Activated CD4-positive, alpha-beta T cell treated with anti-CD3 and anti-CD28 coated beads for 36 hours (primary cell): ENCODE measurements at regions of chr12 and their contacts with region 1.

Region 1: DNA sequence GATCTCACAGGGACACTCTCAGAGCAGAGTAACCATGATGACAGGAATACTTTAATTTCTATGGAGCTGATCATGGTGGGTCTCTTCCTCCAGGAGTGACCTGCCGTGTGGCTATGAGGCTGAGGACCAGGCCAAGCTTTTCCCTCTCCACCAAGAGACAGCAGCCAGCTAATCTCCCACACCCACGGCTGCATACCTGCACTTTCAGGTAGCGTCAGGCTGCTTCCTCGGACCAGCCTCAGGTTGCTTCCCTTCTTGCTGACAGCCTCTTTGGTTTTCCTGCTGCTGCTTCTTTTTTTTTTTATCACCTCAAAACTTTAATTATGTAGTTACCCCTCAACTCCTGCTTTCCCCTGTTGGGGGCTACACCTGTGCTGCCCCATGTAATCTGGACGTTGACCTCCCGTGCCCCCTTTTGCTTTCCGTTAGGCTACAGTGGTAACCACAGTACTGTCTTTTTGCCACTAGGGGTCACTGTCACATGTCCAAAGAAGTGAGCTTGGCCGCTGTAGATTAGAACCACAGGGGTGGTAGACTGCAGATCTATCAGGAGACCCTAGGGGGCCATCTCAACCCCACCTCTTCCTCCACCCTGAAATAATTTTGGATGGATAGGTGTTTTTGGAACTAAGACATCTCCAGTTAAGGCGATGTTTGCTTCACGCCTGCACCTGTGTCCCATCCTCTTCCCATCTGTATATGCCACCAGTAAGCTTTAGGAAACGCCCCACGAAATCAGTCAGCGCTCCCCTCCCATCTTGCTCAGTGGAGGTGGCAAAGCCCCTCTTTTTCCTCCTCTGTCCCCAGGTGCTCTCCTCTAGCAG is 7.8 kb upstream of the PIP4K2C start:
- DNase-seq: peak; percentile 80
- ATAC-seq: peak; percentile 100
- H3K4me3 Mint-ChIP-seq: no peak overlapping the region
- H3K27ac Mint-ChIP-seq: no peak overlapping the region
- H3K4me1 Mint-ChIP-seq: no peaks in the 10 kb centered on the region
- H3K27me3 Mint-ChIP-seq: peaks cover 5% of the 10 kb centered on the region

Region 2: DNA sequence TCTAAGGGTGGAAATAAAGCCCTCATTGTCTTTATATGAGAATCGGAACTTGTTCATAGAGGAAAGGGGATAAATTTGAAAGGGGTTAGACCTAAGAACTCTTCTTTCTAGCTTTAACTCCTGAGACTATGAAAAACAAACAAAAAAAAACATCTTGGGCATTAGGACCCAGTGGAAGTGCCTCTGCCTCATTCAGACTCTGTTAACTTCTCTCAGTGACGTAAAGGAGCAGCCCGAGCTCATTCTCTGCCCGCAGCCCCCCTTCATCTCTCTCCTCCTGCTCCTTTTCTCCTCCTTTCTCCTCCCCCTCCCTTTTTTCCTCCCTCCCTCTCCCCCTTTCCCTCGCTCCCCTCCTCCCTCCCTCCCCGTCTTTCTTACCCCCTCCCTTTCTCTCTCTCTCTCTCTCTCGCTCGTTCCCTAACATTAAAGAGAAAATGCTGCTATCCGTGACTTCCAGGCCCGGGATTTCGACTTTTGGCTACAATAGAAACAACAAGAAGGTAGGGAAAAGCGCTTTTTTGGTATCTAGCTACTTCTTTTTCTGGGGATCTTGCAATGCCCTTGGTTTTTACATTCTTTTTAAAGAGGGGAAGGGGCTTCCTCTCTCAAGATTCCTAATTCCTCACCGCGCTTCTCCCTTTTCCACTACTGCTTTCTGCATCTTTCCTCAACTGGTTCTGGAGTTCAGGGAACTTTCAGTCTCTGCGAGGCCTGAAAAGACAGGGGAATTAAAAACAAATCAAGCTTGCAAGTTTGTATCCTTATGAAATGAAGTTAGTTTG is 1061.4 kb before region 1 on chr12 and contains the start of gene RBMS2:
- CTCF ChIA-PET with region 1: no interaction called
- POLR2A ChIA-PET with region 1: no interaction called
- intact Hi-C with region 1: no loop called
- DNase-seq: peak; percentile 66
- ATAC-seq: peak; percentile 90
- H3K4me3 Mint-ChIP-seq: peak within 1 kb of the TSS; percentile 75
- H3K27ac Mint-ChIP-seq: peak within 1 kb of the TSS; percentile 79
- H3K4me1 Mint-ChIP-seq: peaks cover 29% of the 10 kb centered on the region
- H3K27me3 Mint-ChIP-seq: no peaks in the 10 kb centered on the region
- total RNA-seq, gene RBMS2: 5.0 to 7.0 TPM

Region 3: DNA sequence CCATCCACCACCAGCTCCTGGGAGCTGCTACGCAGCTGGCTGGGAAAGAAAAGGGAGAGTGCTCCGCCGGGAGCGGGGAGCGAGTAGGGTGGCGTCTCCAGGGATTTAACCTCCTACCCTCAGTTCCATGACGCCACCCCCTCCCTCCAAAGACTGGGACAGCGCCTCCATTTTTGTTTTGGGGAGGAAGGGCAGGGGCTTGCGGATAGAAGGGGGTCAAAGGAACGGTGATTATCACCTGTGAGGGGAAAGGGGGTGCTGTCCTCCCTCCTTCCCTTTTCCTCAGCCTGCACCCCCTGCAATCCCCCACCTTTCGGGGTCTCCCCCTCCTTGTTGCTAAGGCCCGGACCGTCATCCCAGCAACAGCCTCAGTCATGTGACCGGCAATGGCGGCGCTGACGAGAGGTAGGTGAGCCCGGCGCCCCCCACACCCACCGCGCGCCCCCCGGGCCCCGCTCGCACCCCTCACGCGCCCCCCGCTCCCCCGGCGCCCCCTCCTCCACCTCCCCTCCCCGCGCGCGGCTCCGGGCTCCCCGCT is 21.3 kb after region 1 on chr12 and contains the start of gene DTX3:
- CTCF ChIA-PET with region 1: interaction called, 19 read pairs
- POLR2A ChIA-PET with region 1: no interaction called
- intact Hi-C with region 1: no loop called
- DNase-seq: peak; percentile 71
- ATAC-seq: peak; percentile 68
- H3K4me3 Mint-ChIP-seq: peak within 1 kb of the TSS; percentile 71
- H3K27ac Mint-ChIP-seq: peak within 1 kb of the TSS; percentile 81
- H3K4me1 Mint-ChIP-seq: peaks cover 23% of the 10 kb centered on the region
- H3K27me3 Mint-ChIP-seq: no peaks in the 10 kb centered on the region
- total RNA-seq, gene DTX3: 16.7 to 17.0 TPM

Region 4: GRCh38 chr12:57621497-57622292 is 38.5 kb after region 1 on chr12:
- CTCF ChIA-PET with region 1: interaction called, 76 read pairs
- POLR2A ChIA-PET with region 1: interaction called, 3 read pairs
- intact Hi-C with region 1: loop called (anchors 1 kb)
- DNase-seq: peak; percentile 79
- ATAC-seq: peak; percentile 80
- H3K4me3 Mint-ChIP-seq: peak overlapping the region; percentile 60
- H3K27ac Mint-ChIP-seq: no peak overlapping the region
- H3K4me1 Mint-ChIP-seq: peaks cover 28% of the 10 kb centered on the region
- H3K27me3 Mint-ChIP-seq: peaks cover 84% of the 10 kb centered on the region

Region 5: GRCh38 chr12:57632694-57633477 is 49.7 kb after region 1 on chr12 and contains the start of gene B4GALNT1:
- CTCF ChIA-PET with region 1: interaction called, 12 read pairs
- POLR2A ChIA-PET with region 1: no interaction called
- intact Hi-C with region 1: loop called in 1 of 2 experiments (anchors 1 kb)
- DNase-seq: peak; percentile 81
- ATAC-seq: peak; percentile 86
- H3K4me3 Mint-ChIP-seq: peak within 1 kb of the TSS; percentile 54
- H3K27ac Mint-ChIP-seq: no peak within 1 kb of the TSS
- H3K4me1 Mint-ChIP-seq: peaks cover 7% of the 10 kb centered on the region
- H3K27me3 Mint-ChIP-seq: peaks cover 49% of the 10 kb centered on the region
- total RNA-seq, gene B4GALNT1: 1.4 to 1.5 TPM

Region 6: DNA sequence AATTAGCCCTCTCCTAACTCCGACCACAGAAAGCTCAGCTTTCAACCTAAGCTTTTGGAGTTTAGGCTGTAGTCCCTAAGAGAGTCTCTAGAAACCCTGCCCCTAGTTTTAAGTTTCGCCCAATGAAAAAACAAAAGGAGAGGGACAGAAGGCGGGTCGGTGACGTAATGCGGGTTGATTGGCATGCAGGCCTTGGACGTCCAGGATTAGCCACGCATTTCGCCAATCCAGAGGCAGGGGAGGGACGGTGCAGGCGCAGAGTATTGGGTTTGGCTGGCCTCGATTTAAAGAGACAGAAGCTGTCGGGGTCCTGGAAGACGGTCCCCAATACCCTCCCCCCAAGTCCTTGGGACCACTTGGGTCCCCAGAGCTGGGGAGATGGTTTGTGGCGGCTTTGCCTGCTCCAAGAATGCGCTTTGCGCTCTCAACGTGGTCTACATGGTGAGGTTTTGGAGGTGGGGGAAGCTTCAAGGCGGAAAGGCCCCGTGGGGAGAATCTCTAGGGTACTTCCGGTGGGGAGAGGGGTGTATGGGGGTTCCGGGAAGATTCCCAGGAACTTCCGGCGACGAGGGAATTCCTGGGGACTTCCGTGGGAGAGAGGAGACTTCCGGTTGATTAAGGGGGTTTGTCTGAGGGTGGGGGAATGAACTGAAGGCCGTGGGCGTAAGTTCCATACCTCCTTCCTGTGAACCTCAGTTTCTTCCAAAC is 161.7 kb after region 1 on chr12 and contains the start of gene TSPAN31:
- CTCF ChIA-PET with region 1: interaction called, 7 read pairs
- POLR2A ChIA-PET with region 1: no interaction called
- intact Hi-C with region 1: loop called (anchors 1 to 2 kb)
- DNase-seq: peak; percentile 98
- ATAC-seq: peak; percentile 82
- H3K4me3 Mint-ChIP-seq: peak within 1 kb of the TSS; percentile 94
- H3K27ac Mint-ChIP-seq: peak within 1 kb of the TSS; percentile 98
- H3K4me1 Mint-ChIP-seq: peaks cover 47% of the 10 kb centered on the region
- H3K27me3 Mint-ChIP-seq: no peaks in the 10 kb centered on the region
- total RNA-seq, gene TSPAN31: 13.6 to 15.9 TPM